H1 (cell line): ENCODE measurements at regions of chr3 and their contacts with region 1.

Region 1: DNA sequence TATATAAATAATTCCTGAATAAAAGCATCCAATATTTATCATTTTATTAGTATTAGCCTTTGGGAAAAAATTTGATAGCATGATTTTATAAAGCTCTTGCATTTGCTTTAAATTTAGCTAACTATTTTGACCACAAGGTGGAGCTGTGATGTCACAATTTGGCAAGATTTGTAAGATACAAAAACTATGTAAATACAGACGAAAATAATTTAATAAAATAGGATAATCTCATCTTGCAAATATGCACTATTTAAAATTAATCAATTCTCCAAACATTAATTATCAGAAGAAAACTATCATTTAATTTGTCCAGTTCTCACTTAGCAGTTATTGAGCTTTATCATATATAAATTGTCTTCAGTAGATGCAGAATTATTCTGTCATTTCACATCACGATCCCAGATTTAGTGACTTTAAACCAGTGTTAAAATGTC is 95.4 kb downstream of the PLOD2 start:
- DNase-seq: no peak
- H3K4me3 ChIP-seq: no peak overlapping the region
- H3K27ac ChIP-seq: no peak overlapping the region
- H3K4me1 ChIP-seq: no peaks in the 10 kb centered on the region
- H3K27me3 ChIP-seq: no peaks in the 10 kb centered on the region
- CTCF ChIP-seq: peak in 2 of 3 experiments; percentile 23 to 44; a peak in 2 of 4 replicates
- EP300 ChIP-seq: no peak
- POLR2A ChIP-seq: no peak
- RAD21 ChIP-seq: peak; percentile 63 to 74

Region 2: DNA sequence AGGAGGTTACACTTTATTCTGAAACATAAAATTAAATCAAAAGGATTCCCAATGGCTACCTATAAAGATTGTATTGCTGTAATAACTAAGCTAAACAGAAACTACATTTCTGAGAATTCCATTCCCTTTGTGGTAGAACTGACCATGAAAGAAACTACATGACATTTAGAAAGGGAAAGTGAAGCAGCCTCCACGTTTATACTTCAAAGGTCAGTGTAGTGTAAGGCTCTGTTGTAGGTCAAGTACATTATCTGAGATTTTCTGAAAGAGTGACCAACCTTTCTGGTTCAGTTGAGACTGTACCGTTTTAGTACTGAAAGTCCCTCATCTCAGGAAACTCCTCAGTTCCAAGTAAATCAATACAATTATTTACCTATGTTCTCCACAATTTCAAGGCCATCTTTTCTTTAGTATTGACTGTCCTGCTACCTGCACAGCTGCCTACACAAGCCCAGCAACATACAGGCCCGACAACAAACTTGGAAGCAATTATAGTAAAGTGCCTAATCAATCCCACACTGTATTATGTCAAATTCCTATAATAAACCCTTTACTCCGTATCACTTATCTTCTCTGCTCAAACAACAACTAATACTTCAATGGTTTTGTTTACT is 247.6 kb before region 1 on chr3:
- CTCF ChIA-PET with region 1: no interaction called
- POLR2A ChIA-PET with region 1: no interaction called
- DNase-seq: no peak
- H3K4me3 ChIP-seq: no peak overlapping the region
- H3K27ac ChIP-seq: no peak overlapping the region
- H3K4me1 ChIP-seq: peaks cover 0 to 4% (median 2%) of the 10 kb centered on the region in 4 experiments; a peak in 4 of 7 replicates
- H3K27me3 ChIP-seq: no peaks in the 10 kb centered on the region
- CTCF ChIP-seq: no peak
- EP300 ChIP-seq: no peak
- POLR2A ChIP-seq: no peak
- RAD21 ChIP-seq: no peak

Region 3: GRCh38 chr3:146035356-146035755 is 30.2 kb before region 1 on chr3:
- CTCF ChIA-PET with region 1: no interaction called
- POLR2A ChIA-PET with region 1: no interaction called
- DNase-seq: no peak
- H3K4me3 ChIP-seq: no peak overlapping the region
- H3K27ac ChIP-seq: no peak overlapping the region
- H3K4me1 ChIP-seq: peaks cover 0 to 4% (median 0%) of the 10 kb centered on the region in 4 experiments; a peak in 1 of 7 replicates
- H3K27me3 ChIP-seq: no peaks in the 10 kb centered on the region
- CTCF ChIP-seq: no peak
- EP300 ChIP-seq: no peak
- POLR2A ChIP-seq: no peak
- RAD21 ChIP-seq: no peak

Region 4: DNA sequence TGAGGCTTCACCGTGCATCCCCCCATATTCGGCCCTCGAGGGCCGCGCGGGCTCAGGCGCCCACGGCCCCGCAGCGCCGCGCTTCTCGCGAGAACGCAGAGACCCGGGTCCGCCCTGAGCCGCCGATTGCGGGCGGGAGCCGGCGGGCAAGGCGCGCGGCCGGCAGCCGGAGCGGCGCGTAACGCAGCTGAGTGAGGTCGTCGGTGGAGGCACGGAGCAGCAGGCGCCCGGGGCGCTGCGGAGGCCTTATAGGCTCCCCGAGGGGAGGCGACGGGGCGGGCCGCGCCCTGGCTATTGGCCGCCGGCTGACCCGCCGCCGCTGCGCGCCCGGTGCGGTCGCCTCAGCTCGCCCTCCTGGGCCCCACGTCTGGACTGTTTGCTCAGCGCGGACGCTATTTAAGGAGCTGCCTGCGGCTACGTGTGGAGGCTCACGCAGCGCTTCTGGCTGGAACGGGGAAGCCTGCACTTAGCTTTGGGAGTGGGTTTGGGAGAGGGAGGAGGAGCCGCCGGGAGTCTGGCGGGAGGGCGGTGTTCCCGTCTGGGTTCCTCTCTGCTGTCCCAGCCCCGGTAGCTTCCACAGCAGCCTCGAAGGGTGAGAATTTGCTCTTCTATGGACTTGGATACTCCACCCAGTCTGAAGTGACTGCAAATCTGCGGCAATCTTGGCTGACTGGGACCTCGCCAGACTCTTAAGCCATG is 95.5 kb after region 1 on chr3 and contains the start of gene PLOD2:
- CTCF ChIA-PET with region 1: interaction called, 19 read pairs
- POLR2A ChIA-PET with region 1: interaction called, 6 read pairs
- DNase-seq: peak; percentile 36 to 77
- H3K4me3 ChIP-seq: peak within 1 kb of the TSS; percentile 69 to 89 (median 73)
- H3K27ac ChIP-seq: peak within 1 kb of the TSS; percentile 58; the same call in 1 of the 2 replicates
- H3K4me1 ChIP-seq: peaks cover 0 to 7% (median 3%) of the 10 kb centered on the region in 4 experiments; a peak in 3 of 7 replicates
- H3K27me3 ChIP-seq: peaks cover 0 to 6% (median 1%) of the 10 kb centered on the region in 4 experiments; a peak in 3 of 7 replicates
- CTCF ChIP-seq: no peak
- EP300 ChIP-seq: no peak; a peak in 1 of 3 replicates
- POLR2A ChIP-seq: peak; percentile 46 to 86
- RAD21 ChIP-seq: no peak
- total RNA-seq, gene PLOD2: 25.7 and 28.7 TPM in 2 replicates

Region 5: GRCh38 chr3:146177519-146177918 is 111.9 kb after region 1 on chr3:
- CTCF ChIA-PET with region 1: interaction called, 15 read pairs
- POLR2A ChIA-PET with region 1: no interaction called
- DNase-seq: no peak
- H3K4me3 ChIP-seq: no peak overlapping the region
- H3K27ac ChIP-seq: no peak overlapping the region
- H3K4me1 ChIP-seq: no peaks in the 10 kb centered on the region
- H3K27me3 ChIP-seq: no peaks in the 10 kb centered on the region
- CTCF ChIP-seq: no peak
- EP300 ChIP-seq: no peak
- POLR2A ChIP-seq: no peak
- RAD21 ChIP-seq: no peak

Region 6: GRCh38 chr3:146184616-146185015 is 119.0 kb after region 1 on chr3:
- CTCF ChIA-PET with region 1: interaction called, 88 read pairs
- POLR2A ChIA-PET with region 1: no interaction called
- DNase-seq: no peak
- H3K4me3 ChIP-seq: no peak overlapping the region
- H3K27ac ChIP-seq: no peak overlapping the region
- H3K4me1 ChIP-seq: peaks cover 0 to 2% (median 0%) of the 10 kb centered on the region in 4 experiments; a peak in 1 of 7 replicates
- H3K27me3 ChIP-seq: no peaks in the 10 kb centered on the region
- CTCF ChIP-seq: no peak
- EP300 ChIP-seq: no peak
- POLR2A ChIP-seq: no peak
- RAD21 ChIP-seq: no peak

Region 7: DNA sequence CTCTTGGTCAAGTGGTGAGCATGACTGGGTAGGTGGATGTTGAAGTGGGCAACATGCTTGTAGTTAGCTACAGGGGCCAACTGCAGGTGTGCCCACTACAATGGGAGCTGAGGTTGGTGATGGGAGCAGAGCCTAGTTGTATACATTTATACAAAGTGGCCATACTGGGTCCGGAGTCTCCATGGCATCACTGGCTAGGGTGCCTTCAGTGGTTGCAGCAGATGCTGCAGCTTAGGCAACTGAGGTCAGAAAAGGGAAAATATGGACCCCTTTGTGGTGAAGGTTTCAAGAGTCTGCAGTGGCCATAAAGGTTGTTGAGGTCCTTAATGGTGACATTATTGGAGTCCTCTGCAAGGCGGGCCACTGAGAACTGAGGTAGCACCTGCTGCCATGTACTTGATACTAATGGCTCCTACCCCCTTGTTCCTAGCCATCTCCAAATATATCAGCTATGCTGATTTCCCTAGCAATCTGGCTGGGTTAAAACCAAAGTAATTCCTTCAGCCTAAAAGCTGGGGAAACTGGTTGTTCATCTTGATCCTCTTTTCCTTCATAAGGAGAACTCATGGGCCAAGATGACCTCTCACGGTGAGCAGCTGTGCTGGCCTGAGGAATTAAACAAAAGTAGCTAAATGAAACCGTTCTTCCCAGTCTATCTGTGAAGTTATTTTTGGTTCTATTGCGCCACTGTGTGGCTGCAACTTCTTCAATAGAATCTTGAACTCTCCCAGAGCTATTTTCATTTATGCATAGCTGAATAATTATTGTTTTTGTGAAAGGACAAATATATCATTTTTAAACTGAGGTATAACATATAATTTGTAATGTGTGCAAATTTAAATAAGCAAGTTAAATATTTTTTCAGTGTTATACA is 261.3 kb after region 1 on chr3:
- CTCF ChIA-PET with region 1: interaction called, 13 read pairs
- POLR2A ChIA-PET with region 1: no interaction called
- DNase-seq: no peak
- H3K4me3 ChIP-seq: no peak overlapping the region
- H3K27ac ChIP-seq: no peak overlapping the region
- H3K4me1 ChIP-seq: no peaks in the 10 kb centered on the region
- H3K27me3 ChIP-seq: no peaks in the 10 kb centered on the region
- CTCF ChIP-seq: peak in 2 of 3 experiments; percentile 20 to 44; a peak in 2 of 4 replicates
- EP300 ChIP-seq: no peak
- POLR2A ChIP-seq: no peak
- RAD21 ChIP-seq: peak; percentile 73 to 80